ENCODE measurements at regions of chr22 and their contacts with region 1.

Region 1: DNA sequence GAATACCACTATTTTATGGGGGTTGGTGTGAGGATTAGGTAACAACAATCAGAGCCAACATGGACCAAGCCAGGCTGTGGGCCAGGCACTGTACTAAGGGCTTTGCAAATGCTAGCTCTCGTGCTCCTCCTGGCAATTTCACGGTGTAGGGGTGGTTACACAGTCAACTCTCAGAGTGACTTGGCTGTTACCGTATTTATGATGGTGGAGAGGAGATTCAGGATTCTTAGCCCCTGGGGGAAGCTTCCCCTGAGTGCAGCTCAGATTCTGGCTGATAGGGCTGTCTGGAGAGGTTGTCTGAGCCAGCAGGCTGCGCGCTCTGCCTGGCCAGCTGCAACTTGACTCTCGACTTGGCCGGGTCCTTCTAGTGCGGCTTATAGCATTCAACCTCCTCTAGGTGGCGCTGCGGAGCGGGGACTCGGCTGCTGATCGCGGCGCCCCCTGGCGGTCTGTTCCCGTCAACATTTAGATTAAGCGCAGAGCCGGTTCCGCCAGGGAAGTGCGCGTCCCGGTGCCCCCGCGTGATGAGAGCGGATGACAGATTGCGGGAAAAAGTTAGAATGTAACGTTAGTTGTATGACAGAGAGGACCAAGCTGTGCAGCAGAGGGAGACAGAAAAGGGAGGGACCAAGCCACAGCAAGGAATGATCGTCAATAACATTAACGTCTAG is 4.5 kb upstream of the NCF4 start:
- DNase-seq: peak; percentile 82 to 95 (median 89)
- H3K4me3 ChIP-seq: no peak overlapping the region
- H3K4me3 Mint-ChIP-seq: peak overlapping the region in 4 of 7 donors; percentile 9 to 65 (median 38)
- H3K27ac ChIP-seq: no peak overlapping the region
- H3K27ac Mint-ChIP-seq: peak overlapping the region in 3 of 8 donors; percentile 13 to 78 (median 72)
- H3K4me1 ChIP-seq: peaks cover 18% of the 10 kb centered on the region
- H3K4me1 Mint-ChIP-seq: peaks cover 18 to 28% (median 28%) of the 10 kb centered on the region in 3 donors
- H3K27me3 ChIP-seq: no peaks in the 10 kb centered on the region
- H3K27me3 Mint-ChIP-seq: peaks cover 5 to 6% of the 10 kb centered on the region in 2 donors

Region 2: DNA sequence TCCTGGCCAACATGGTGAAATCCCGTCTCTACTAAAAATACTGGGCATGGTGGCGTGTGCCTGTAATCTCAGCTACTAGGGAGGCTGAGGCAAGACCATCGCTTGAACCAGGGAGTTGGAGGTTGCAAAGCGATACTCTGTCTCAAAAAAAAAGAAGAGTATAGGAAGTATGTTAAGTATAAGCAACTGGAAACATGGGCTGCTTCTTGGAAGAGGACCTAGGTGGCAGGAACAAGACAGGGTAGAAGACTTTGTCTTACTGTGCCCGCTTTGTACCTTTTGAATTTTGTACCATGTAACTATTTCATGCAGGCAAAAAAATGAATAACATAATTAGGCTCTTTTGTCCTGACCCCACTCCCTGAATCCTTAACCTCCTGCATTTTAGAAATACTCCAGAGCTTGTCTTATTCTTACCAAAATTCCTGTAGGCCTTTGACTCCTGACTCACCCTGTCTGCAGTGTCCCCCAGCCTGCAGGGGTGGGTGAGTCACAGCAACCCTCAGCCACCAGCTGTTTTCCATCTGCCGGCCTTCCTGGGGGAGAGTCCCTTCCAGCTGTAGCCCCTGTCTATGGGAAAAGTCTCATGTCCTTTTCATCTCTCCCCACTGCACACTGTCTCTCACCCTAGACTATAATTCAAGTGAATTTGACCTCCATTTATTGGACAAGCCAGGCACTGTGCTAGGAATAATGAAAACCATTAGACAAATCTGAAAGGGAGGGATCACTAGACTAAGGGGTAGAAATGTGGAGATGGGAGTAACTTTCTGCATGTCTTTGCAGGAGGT is 416.6 kb before region 1 on chr22:
- CTCF ChIA-PET with region 1: no interaction called
- POLR2A ChIA-PET with region 1: no interaction called
- DNase-seq: no peak
- H3K4me3 ChIP-seq: no peak overlapping the region
- H3K4me3 Mint-ChIP-seq: no peak overlapping the region
- H3K27ac ChIP-seq: no peak overlapping the region
- H3K27ac Mint-ChIP-seq: peak overlapping the region in 4 of 8 donors; percentile 8 to 85 (median 62)
- H3K4me1 ChIP-seq: peaks cover 39% of the 10 kb centered on the region
- H3K4me1 Mint-ChIP-seq: peaks cover 20 to 37% (median 35%) of the 10 kb centered on the region in 3 donors
- H3K27me3 ChIP-seq: no peaks in the 10 kb centered on the region
- H3K27me3 Mint-ChIP-seq: no peaks in the 10 kb centered on the region

Region 3: GRCh38 chr22:36757668-36758211 is 98.5 kb before region 1 on chr22:
- CTCF ChIA-PET with region 1: interaction called, 17 read pairs
- POLR2A ChIA-PET with region 1: no interaction called
- DNase-seq: peak; percentile 43 to 81 (median 52)
- H3K4me3 ChIP-seq: no peak overlapping the region
- H3K4me3 Mint-ChIP-seq: no peak overlapping the region
- H3K27ac ChIP-seq: no peak overlapping the region
- H3K27ac Mint-ChIP-seq: peak overlapping the region in 1 of 8 donors; percentile 59
- H3K4me1 ChIP-seq: no peaks in the 10 kb centered on the region
- H3K4me1 Mint-ChIP-seq: peaks cover 0 to 4% (median 3%) of the 10 kb centered on the region in 3 donors
- H3K27me3 ChIP-seq: no peaks in the 10 kb centered on the region
- H3K27me3 Mint-ChIP-seq: peaks cover 8 to 19% of the 10 kb centered on the region in 2 donors

Region 4: GRCh38 chr22:36781656-36782627 is 74.3 kb before region 1 on chr22:
- CTCF ChIA-PET with region 1: interaction called, 40 read pairs
- POLR2A ChIA-PET with region 1: no interaction called
- DNase-seq: peak; percentile 72 to 88 (median 75)
- H3K4me3 ChIP-seq: no peak overlapping the region
- H3K4me3 Mint-ChIP-seq: peak overlapping the region in 4 of 7 donors; percentile 8 to 61 (median 43)
- H3K27ac ChIP-seq: no peak overlapping the region
- H3K27ac Mint-ChIP-seq: peak overlapping the region in 6 of 8 donors; percentile 41 to 91 (median 67)
- H3K4me1 ChIP-seq: peaks cover 14% of the 10 kb centered on the region
- H3K4me1 Mint-ChIP-seq: peaks cover 14 to 22% (median 17%) of the 10 kb centered on the region in 3 donors
- H3K27me3 ChIP-seq: no peaks in the 10 kb centered on the region
- H3K27me3 Mint-ChIP-seq: peaks cover 8 to 13% of the 10 kb centered on the region in 2 donors

Region 5: GRCh38 chr22:36887162-36887561 is 30.9 kb after region 1 on chr22:
- CTCF ChIA-PET with region 1: interaction called, 10 read pairs
- POLR2A ChIA-PET with region 1: no interaction called
- DNase-seq: peak in 1 of 5 donors; percentile 9
- H3K4me3 ChIP-seq: no peak overlapping the region
- H3K4me3 Mint-ChIP-seq: no peak overlapping the region
- H3K27ac ChIP-seq: no peak overlapping the region
- H3K27ac Mint-ChIP-seq: peak overlapping the region in 3 of 8 donors; percentile 40 to 74 (median 68)
- H3K4me1 ChIP-seq: no peaks in the 10 kb centered on the region
- H3K4me1 Mint-ChIP-seq: peaks cover 4 to 6% (median 5%) of the 10 kb centered on the region in 3 donors
- H3K27me3 ChIP-seq: peaks cover 3% of the 10 kb centered on the region
- H3K27me3 Mint-ChIP-seq: peaks cover 10 to 42% of the 10 kb centered on the region in 2 donors

Region 6: GRCh38 chr22:37088108-37088605 is 231.9 kb after region 1 on chr22:
- CTCF ChIA-PET with region 1: no interaction called
- POLR2A ChIA-PET with region 1: no interaction called
- DNase-seq: no peak
- H3K4me3 ChIP-seq: no peak overlapping the region
- H3K4me3 Mint-ChIP-seq: no peak overlapping the region
- H3K27ac ChIP-seq: no peak overlapping the region
- H3K27ac Mint-ChIP-seq: peak overlapping the region in 1 of 8 donors; percentile 18
- H3K4me1 ChIP-seq: no peaks in the 10 kb centered on the region
- H3K4me1 Mint-ChIP-seq: no peaks in the 10 kb centered on the region
- H3K27me3 ChIP-seq: no peaks in the 10 kb centered on the region
- H3K27me3 Mint-ChIP-seq: peaks cover 2 to 3% of the 10 kb centered on the region in 2 donors